BJ (cell line): ENCODE measurements at regions of chr6 and their contacts with region 1.

Region 1: GRCh38 chr6:107691062-107691751 is 132.9 kb downstream of the SCML4 start:
- DNase-seq: no peak
- H3K4me3 ChIP-seq: no peak overlapping the region
- H3K27me3 ChIP-seq: no peaks in the 10 kb centered on the region
- CTCF ChIP-seq: no peak

Region 2: GRCh38 chr6:106918115-106918514 is 773.1 kb before region 1 on chr6:
- CTCF ChIA-PET with region 1: no interaction called
- POLR2A ChIA-PET with region 1: interaction called, 19 read pairs
- DNase-seq: no peak
- H3K4me3 ChIP-seq: no peak overlapping the region
- H3K27me3 ChIP-seq: no peaks in the 10 kb centered on the region
- CTCF ChIP-seq: no peak

Region 3: GRCh38 chr6:107655245-107655644 is 36.0 kb before region 1 on chr6:
- CTCF ChIA-PET with region 1: no interaction called
- POLR2A ChIA-PET with region 1: no interaction called
- DNase-seq: no peak
- H3K4me3 ChIP-seq: no peak overlapping the region
- H3K27me3 ChIP-seq: no peaks in the 10 kb centered on the region
- CTCF ChIP-seq: no peak